Naive thymus-derived CD4-positive, alpha-beta T cell (primary cell): ENCODE measurements at regions of chr12 and their contacts with region 1.

Region 1: DNA sequence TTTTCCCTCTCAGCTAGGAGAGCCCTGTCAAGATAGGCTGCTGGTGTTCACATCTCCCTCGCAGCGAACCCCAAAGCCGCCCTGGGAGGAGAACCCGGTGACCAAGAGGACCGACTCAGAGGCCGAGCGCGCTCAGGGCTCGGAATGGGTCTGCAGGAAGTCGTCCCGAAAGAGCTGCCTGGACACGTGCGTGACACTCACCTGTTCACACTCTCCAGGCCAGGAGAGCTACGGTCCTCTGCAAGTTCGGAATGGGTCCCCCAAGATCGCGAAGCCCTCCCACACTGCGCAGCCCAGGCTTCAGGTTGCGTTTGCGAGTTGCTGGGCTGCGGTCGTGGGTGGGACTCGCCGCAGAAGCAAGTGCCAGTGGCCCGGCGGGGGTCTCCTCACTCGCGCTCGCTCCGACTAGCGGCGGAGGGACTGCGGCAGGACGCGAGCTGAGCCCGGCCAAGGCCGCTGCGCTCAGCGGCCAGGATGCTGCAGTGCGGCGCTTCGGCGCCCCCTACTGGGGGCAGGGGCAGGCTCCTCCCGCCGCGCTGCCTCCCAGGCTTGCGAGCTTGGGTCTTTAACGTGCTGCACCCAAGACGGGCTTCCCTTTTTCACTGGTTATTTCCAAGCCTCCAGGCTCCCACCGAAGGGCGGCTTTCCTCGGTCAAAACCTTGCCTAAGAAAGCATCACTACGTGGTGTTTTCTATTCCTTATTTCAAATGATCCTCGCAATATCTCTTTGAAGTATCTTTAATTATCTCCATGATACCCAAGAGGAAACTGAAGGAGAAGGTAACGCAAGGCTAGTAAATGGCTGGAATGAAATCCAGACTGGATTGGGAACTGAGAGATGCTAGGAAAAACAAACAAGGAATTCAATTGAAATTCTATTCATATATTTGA is at the start of gene RERG:
- DNase-seq: peak; percentile 57 to 86 (median 77)
- ATAC-seq: peak; percentile 99
- H3K4me3 ChIP-seq: peak within 1 kb of the TSS; percentile 43
- H3K4me3 Mint-ChIP-seq: peak within 1 kb of the TSS; percentile 61 to 83 (median 78)
- H3K27ac ChIP-seq: no peak within 1 kb of the TSS
- H3K27ac Mint-ChIP-seq: no peak within 1 kb of the TSS
- H3K4me1 ChIP-seq: peaks cover 6% of the 10 kb centered on the region in 2 donors
- H3K4me1 Mint-ChIP-seq: peaks cover 0 to 17% (median 9%) of the 10 kb centered on the region in 7 donors
- H3K27me3 ChIP-seq: no peaks in the 10 kb centered on the region
- H3K27me3 Mint-ChIP-seq: peaks cover 25 to 43% (median 32%) of the 10 kb centered on the region in 5 donors
- total RNA-seq, gene RERG: 0.35 TPM in 1 of 5 experiments, not detected in the others

Region 2: GRCh38 chr12:14723763-14724162 is 497.5 kb before region 1 on chr12:
- CTCF ChIA-PET with region 1: interaction called, 9 read pairs
- POLR2A ChIA-PET with region 1: no interaction called
- intact Hi-C with region 1: loop called (anchors 1 kb)
- DNase-seq: peak; percentile 19 to 67 (median 59)
- ATAC-seq: peak; percentile 83
- H3K4me3 ChIP-seq: no peak overlapping the region
- H3K4me3 Mint-ChIP-seq: no peak overlapping the region
- H3K27ac ChIP-seq: no peak overlapping the region
- H3K27ac Mint-ChIP-seq: no peak overlapping the region
- H3K4me1 ChIP-seq: no peaks in the 10 kb centered on the region
- H3K4me1 Mint-ChIP-seq: peaks cover 0 to 4% (median 0%) of the 10 kb centered on the region in 7 donors
- H3K27me3 ChIP-seq: no peaks in the 10 kb centered on the region
- H3K27me3 Mint-ChIP-seq: peaks cover 0 to 34% (median 10%) of the 10 kb centered on the region in 5 donors

Region 3: DNA sequence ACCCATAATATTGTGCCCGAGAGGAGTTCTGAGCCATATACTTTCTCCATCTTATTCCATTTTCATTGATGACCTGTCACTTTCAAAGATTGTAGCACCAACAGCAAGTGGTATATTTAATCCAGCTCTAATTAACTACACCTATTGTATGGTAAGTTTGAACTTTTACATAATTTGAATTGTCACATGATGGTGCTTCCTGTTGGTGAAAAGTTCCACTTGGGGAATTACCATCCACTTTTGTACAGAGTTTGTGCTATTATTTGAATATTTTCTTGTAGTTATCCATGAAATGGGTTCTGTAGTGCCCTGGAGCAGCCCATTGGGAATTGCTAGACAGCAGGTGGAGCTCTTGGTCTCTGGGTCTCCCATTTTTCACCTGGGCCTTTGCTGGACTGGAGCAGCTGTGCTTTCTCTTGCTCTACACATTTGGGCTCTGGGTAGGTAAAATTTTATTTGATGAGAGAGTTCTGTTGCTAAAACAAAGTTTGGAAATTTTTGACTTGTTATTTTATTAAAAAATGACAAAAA is 410.2 kb before region 1 on chr12:
- CTCF ChIA-PET with region 1: interaction called, 6 read pairs
- POLR2A ChIA-PET with region 1: no interaction called
- intact Hi-C with region 1: loop called in 1 of 2 experiments (anchors 1 kb)
- DNase-seq: peak in 1 of 9 donors; percentile 15
- ATAC-seq: peak; percentile 26
- H3K4me3 ChIP-seq: no peak overlapping the region
- H3K4me3 Mint-ChIP-seq: peak overlapping the region in 1 of 10 donors; percentile 6
- H3K27ac ChIP-seq: no peak overlapping the region
- H3K27ac Mint-ChIP-seq: no peak overlapping the region
- H3K4me1 ChIP-seq: peaks cover 0 to 7% of the 10 kb centered on the region in 2 donors
- H3K4me1 Mint-ChIP-seq: peaks cover 4 to 16% (median 14%) of the 10 kb centered on the region in 7 donors
- H3K27me3 ChIP-seq: no peaks in the 10 kb centered on the region
- H3K27me3 Mint-ChIP-seq: peaks cover 0 to 5% (median 0%) of the 10 kb centered on the region in 5 donors

Region 4: GRCh38 chr12:15151161-15152120 is 69.8 kb before region 1 on chr12:
- CTCF ChIA-PET with region 1: interaction called, 6 read pairs
- POLR2A ChIA-PET with region 1: no interaction called
- intact Hi-C with region 1: loop called (anchors 1 to 5 kb)
- DNase-seq: peak in 2 of 9 donors; percentile 1
- ATAC-seq: no peak
- H3K4me3 ChIP-seq: no peak overlapping the region
- H3K4me3 Mint-ChIP-seq: no peak overlapping the region
- H3K27ac ChIP-seq: no peak overlapping the region
- H3K27ac Mint-ChIP-seq: no peak overlapping the region
- H3K4me1 ChIP-seq: no peaks in the 10 kb centered on the region
- H3K4me1 Mint-ChIP-seq: no peaks in the 10 kb centered on the region
- H3K27me3 ChIP-seq: no peaks in the 10 kb centered on the region
- H3K27me3 Mint-ChIP-seq: peaks cover 0 to 30% (median 7%) of the 10 kb centered on the region in 5 donors

Region 5: GRCh38 chr12:15253990-15254389 is 32.8 kb after region 1 on chr12:
- CTCF ChIA-PET with region 1: no interaction called
- POLR2A ChIA-PET with region 1: no interaction called
- intact Hi-C with region 1: no loop called
- DNase-seq: no peak
- ATAC-seq: no peak
- H3K4me3 ChIP-seq: no peak overlapping the region
- H3K4me3 Mint-ChIP-seq: no peak overlapping the region
- H3K27ac ChIP-seq: no peak overlapping the region
- H3K27ac Mint-ChIP-seq: no peak overlapping the region
- H3K4me1 ChIP-seq: no peaks in the 10 kb centered on the region
- H3K4me1 Mint-ChIP-seq: no peaks in the 10 kb centered on the region
- H3K27me3 ChIP-seq: no peaks in the 10 kb centered on the region
- H3K27me3 Mint-ChIP-seq: peaks cover 45 to 64% (median 56%) of the 10 kb centered on the region in 5 donors

Region 6: DNA sequence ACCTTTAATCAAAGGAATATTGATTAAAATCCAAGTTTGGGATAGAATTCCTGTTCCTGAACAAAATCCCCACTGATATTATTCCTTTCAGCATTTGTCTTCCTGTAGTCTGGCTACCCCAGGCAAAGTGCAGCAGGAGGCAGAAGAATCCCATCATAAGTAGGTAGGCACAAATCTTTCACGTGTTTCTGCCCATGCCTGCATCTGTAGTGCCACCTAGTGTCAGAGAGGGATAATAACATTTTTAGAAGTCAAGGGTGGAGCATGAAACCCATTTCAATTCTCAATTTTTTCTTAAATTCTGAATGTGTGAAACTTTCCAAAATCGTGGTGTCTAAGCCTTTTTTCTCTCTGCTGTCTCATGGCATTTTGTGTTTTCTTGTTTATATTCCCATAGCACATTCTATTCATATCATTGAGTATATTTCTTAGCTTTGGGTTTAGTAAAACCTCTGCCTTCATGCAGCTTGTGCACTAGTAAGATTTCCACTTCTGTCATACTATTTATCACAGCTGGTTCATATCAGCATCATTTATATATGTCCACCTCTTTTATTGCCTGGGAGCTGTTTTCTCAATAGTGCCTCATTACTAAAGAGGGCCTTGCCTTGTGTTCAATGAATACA is 47.8 kb after region 1 on chr12:
- CTCF ChIA-PET with region 1: no interaction called
- POLR2A ChIA-PET with region 1: no interaction called
- intact Hi-C with region 1: loop called (anchors 2 kb)
- DNase-seq: peak in 7 of 9 donors; percentile 28 to 65 (median 56)
- ATAC-seq: peak; percentile 79
- H3K4me3 ChIP-seq: no peak overlapping the region
- H3K4me3 Mint-ChIP-seq: no peak overlapping the region
- H3K27ac ChIP-seq: no peak overlapping the region
- H3K27ac Mint-ChIP-seq: no peak overlapping the region
- H3K4me1 ChIP-seq: no peaks in the 10 kb centered on the region
- H3K4me1 Mint-ChIP-seq: no peaks in the 10 kb centered on the region
- H3K27me3 ChIP-seq: no peaks in the 10 kb centered on the region
- H3K27me3 Mint-ChIP-seq: peaks cover 2 to 11% (median 5%) of the 10 kb centered on the region in 5 donors